Prostate gland (tissue), 2 donors: ENCODE measurements at regions of chr2 and their contacts with region 1.

Region 1: GRCh38 chr2:69914170-69914960 is 544 bp upstream of the MXD1 start:
- DNase-seq: peak; percentile 100
- H3K4me3 ChIP-seq: peak overlapping the region; percentile 51 to 98
- H3K27ac ChIP-seq: peak overlapping the region; percentile 99 to 100
- H3K4me1 ChIP-seq: no peaks in the 10 kb centered on the region
- H3K27me3 ChIP-seq: no peaks in the 10 kb centered on the region
- CTCF ChIP-seq: peak in 3 of 4 experiments; percentile 38 to 61 (median 38)
- POLR2A ChIP-seq: peak; percentile 99

Region 2: GRCh38 chr2:70070541-70071268 is 156.3 kb after region 1 on chr2:
- intact Hi-C with region 1: loop called (anchors 5 kb)
- DNase-seq: peak; percentile 78
- H3K4me3 ChIP-seq: no peak overlapping the region
- H3K27ac ChIP-seq: peak overlapping the region; percentile 74 to 81
- H3K4me1 ChIP-seq: no peaks in the 10 kb centered on the region
- H3K27me3 ChIP-seq: no peaks in the 10 kb centered on the region
- CTCF ChIP-seq: peak; percentile 70 to 93 (median 89)
- POLR2A ChIP-seq: no peak

Region 3: GRCh38 chr2:70142590-70143313 is 228.4 kb after region 1 on chr2:
- intact Hi-C with region 1: loop called (anchors 1 kb)
- DNase-seq: peak; percentile 99
- H3K4me3 ChIP-seq: peak overlapping the region; percentile 57 to 64
- H3K27ac ChIP-seq: peak overlapping the region; percentile 98 to 100
- H3K4me1 ChIP-seq: no peaks in the 10 kb centered on the region
- H3K27me3 ChIP-seq: no peaks in the 10 kb centered on the region
- CTCF ChIP-seq: peak; percentile 97 to 100 (median 98)
- POLR2A ChIP-seq: peak; percentile 93

Region 4: GRCh38 chr2:70190418-70191243 is 276.3 kb after region 1 on chr2 and contains the start of gene C2orf42:
- intact Hi-C with region 1: loop called (anchors 5 kb)
- DNase-seq: peak; percentile 96
- H3K4me3 ChIP-seq: peak within 1 kb of the TSS; percentile 62 to 77
- H3K27ac ChIP-seq: peak within 1 kb of the TSS; percentile 97 to 98
- H3K4me1 ChIP-seq: no peaks in the 10 kb centered on the region
- H3K27me3 ChIP-seq: no peaks in the 10 kb centered on the region
- CTCF ChIP-seq: peak in 1 of 4 experiments; percentile 8
- POLR2A ChIP-seq: peak; percentile 79
- total RNA-seq, gene C2orf42: 23.6 to 27.9 TPM